GM13977 (cell line): ENCODE measurements at regions of chr2 and their contacts with region 1.

Region 1: GRCh38 chr2:70301344-70302194 is at the start of gene FAM136A:
- DNase-seq: peak; percentile 91
- CTCF ChIP-seq: peak; percentile 93

Region 2: DNA sequence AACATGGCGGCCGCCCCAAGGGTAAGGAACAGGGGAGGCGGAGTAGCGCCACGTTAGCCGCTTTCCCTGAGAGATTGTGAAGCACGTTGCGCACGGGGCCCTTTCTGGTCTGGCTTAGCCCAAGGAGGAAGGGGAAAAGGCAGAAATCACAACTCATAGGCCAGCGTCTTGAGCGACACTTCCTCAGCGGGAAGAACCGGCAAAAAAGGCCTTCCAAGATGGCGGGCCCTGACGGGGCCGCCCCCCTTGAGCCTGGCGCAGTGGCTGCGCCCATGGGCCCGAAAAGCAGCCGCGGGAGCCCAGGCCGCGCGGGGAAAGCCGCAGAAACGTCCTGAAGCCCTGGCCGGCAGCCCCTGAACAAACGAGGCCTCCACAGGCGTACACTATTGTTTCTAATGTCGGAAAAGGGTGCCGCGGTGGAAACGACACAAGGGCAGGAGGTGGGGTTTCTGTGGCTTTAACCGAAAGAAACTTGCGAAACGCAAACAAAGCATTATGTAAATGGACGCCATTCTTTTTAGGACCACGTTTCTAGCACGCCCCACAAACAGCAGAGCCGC is 215.2 kb before region 1 on chr2:
- in situ Hi-C with region 1: no loop called
- DNase-seq: no peak
- CTCF ChIP-seq: no peak

Region 3: GRCh38 chr2:70639841-70640436 is 338.4 kb after region 1 on chr2:
- in situ Hi-C with region 1: loop called (anchors 10 kb)
- DNase-seq: no peak
- CTCF ChIP-seq: no peak